CD8-positive, alpha-beta T cell (primary cell): ENCODE measurements at regions of chr16 and their contacts with region 1.

Region 1: GRCh38 chr16:30922960-30923535 is 324 bp upstream of the FBXL19 start:
- DNase-seq: peak; percentile 90 to 99 (median 94)
- ATAC-seq: peak; percentile 66
- H3K4me3 ChIP-seq: peak overlapping the region; percentile 75 to 96
- H3K4me3 Mint-ChIP-seq: peak overlapping the region; percentile 99
- H3K27ac ChIP-seq: peak overlapping the region; percentile 73 to 92
- H3K27ac Mint-ChIP-seq: peak overlapping the region; percentile 99
- H3K4me1 ChIP-seq: peaks cover 14% of the 10 kb centered on the region
- H3K4me1 Mint-ChIP-seq: peaks cover 22% of the 10 kb centered on the region
- H3K27me3 ChIP-seq: no peaks in the 10 kb centered on the region
- H3K27me3 Mint-ChIP-seq: no peaks in the 10 kb centered on the region
- CTCF ChIP-seq: no peak

Region 2: GRCh38 chr16:28935924-28936783 is 1986.9 kb before region 1 on chr16:
- CTCF ChIA-PET with region 1: no interaction called
- POLR2A ChIA-PET with region 1: no interaction called
- intact Hi-C with region 1: no loop called
- DNase-seq: peak; percentile 61 to 89 (median 80)
- ATAC-seq: peak; percentile 100
- H3K4me3 ChIP-seq: peak overlapping the region; percentile 25 to 41
- H3K4me3 Mint-ChIP-seq: peak overlapping the region; percentile 76
- H3K27ac ChIP-seq: no peak overlapping the region
- H3K27ac Mint-ChIP-seq: no peak overlapping the region
- H3K4me1 ChIP-seq: peaks cover 19% of the 10 kb centered on the region
- H3K4me1 Mint-ChIP-seq: peaks cover 15% of the 10 kb centered on the region
- H3K27me3 ChIP-seq: no peaks in the 10 kb centered on the region
- H3K27me3 Mint-ChIP-seq: no peaks in the 10 kb centered on the region
- CTCF ChIP-seq: no peak

Region 3: GRCh38 chr16:30065143-30065850 is 857.8 kb before region 1 on chr16 and contains the start of gene ALDOA:
- CTCF ChIA-PET with region 1: no interaction called
- POLR2A ChIA-PET with region 1: no interaction called
- intact Hi-C with region 1: loop called in 1 of 2 experiments (anchors 10 kb)
- DNase-seq: peak; percentile 82 to 97 (median 94)
- ATAC-seq: peak; percentile 82
- H3K4me3 ChIP-seq: peak within 1 kb of the TSS; percentile 94 to 99
- H3K4me3 Mint-ChIP-seq: peak within 1 kb of the TSS; percentile 98
- H3K27ac ChIP-seq: peak within 1 kb of the TSS; percentile 87 to 94
- H3K27ac Mint-ChIP-seq: peak within 1 kb of the TSS; percentile 98
- H3K4me1 ChIP-seq: peaks cover 48% of the 10 kb centered on the region
- H3K4me1 Mint-ChIP-seq: peaks cover 43% of the 10 kb centered on the region
- H3K27me3 ChIP-seq: no peaks in the 10 kb centered on the region
- H3K27me3 Mint-ChIP-seq: no peaks in the 10 kb centered on the region
- CTCF ChIP-seq: no peak
- total RNA-seq, gene ALDOA: 339 to 359 TPM

Region 4: DNA sequence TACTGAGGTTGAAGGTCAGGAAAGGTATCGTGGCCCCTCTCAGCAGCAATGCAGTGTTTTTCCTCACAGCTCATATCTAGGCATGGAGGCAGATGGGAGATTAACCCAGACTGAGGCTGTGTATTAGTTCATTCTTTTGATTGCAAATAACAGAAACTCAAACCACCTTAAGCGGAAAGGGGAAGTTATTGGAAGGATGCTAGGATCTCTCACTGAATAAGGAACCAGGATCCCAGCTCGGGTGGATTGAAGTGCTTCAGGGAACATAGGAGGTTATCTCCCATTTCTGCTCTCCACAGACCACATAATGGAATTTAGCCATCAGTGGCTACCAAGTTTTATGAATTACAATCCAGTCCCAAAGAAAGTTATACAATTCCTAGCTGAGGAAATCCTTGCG is 321.1 kb before region 1 on chr16:
- CTCF ChIA-PET with region 1: no interaction called
- POLR2A ChIA-PET with region 1: no interaction called
- intact Hi-C with region 1: no loop called
- DNase-seq: no peak
- ATAC-seq: no peak
- H3K4me3 ChIP-seq: no peak overlapping the region
- H3K4me3 Mint-ChIP-seq: no peak overlapping the region
- H3K27ac ChIP-seq: no peak overlapping the region
- H3K27ac Mint-ChIP-seq: no peak overlapping the region
- H3K4me1 ChIP-seq: no peaks in the 10 kb centered on the region
- H3K4me1 Mint-ChIP-seq: no peaks in the 10 kb centered on the region
- H3K27me3 ChIP-seq: no peaks in the 10 kb centered on the region
- H3K27me3 Mint-ChIP-seq: no peaks in the 10 kb centered on the region
- CTCF ChIP-seq: no peak

Region 5: DNA sequence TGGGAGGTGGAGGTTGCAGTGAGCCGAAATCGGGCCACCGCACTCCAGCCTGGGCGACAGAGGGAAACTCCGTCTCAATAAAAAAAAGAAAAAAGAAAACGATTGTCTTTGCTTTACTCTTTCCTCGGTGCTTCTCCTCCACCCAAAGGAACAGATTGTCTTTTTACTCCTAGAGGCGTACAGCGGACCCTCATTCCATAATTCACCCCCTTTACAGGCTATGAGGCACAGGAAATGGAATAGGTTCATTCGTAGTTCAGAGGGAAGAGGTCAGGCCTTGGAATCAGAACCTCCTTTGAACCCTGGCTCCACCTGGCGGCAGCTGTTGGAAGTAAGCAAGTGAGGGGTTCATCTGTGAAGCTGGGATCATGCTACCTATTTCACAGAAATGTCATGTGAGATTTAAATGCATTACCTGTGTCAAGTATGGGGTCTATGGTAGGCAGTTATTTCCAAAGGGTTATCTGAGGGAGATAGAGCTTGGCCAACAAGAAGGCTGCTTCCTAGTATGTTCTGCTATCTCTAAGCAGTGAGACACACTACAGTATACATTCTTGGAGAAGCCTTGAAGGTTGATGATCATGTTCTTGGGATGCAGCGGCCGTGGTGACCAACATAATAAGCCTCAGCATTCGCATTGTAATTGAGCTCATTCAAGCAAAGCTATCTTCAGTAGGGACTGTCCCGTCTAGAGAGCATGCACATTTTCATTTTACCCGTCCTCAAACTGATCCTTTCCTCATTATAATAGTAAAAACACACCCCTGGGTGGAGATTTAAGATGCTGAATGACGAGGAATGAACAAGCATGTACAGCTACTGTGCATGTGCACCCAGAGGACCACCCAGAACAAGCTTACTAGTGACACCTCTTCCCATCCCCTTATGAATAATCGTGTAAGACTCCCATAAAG is 294.2 kb before region 1 on chr16:
- CTCF ChIA-PET with region 1: no interaction called
- POLR2A ChIA-PET with region 1: no interaction called
- intact Hi-C with region 1: loop called in 1 of 2 experiments (anchors 1 kb)
- DNase-seq: peak; percentile 77 to 92 (median 84)
- ATAC-seq: peak; percentile 96
- H3K4me3 ChIP-seq: peak overlapping the region in 1 of 2 experiments; percentile 10
- H3K4me3 Mint-ChIP-seq: peak overlapping the region; percentile 79
- H3K27ac ChIP-seq: peak overlapping the region in 1 of 2 experiments; percentile 19
- H3K27ac Mint-ChIP-seq: no peak overlapping the region
- H3K4me1 ChIP-seq: peaks cover 9% of the 10 kb centered on the region
- H3K4me1 Mint-ChIP-seq: peaks cover 5% of the 10 kb centered on the region
- H3K27me3 ChIP-seq: no peaks in the 10 kb centered on the region
- H3K27me3 Mint-ChIP-seq: no peaks in the 10 kb centered on the region
- CTCF ChIP-seq: peak; percentile 85

Region 6: GRCh38 chr16:30761928-30762810 is 160.9 kb before region 1 on chr16 and contains the starts of genes CFAP119 and RNF40:
- CTCF ChIA-PET with region 1: no interaction called
- POLR2A ChIA-PET with region 1: no interaction called
- intact Hi-C with region 1: loop called (anchors 1 to 5 kb)
- DNase-seq: peak; percentile 67 to 96 (median 90)
- ATAC-seq: peak; percentile 91
- H3K4me3 ChIP-seq: peak within 1 kb of the TSS; percentile 59 to 95
- H3K4me3 Mint-ChIP-seq: peak within 1 kb of the TSS; percentile 96
- H3K27ac ChIP-seq: peak within 1 kb of the TSS; percentile 74 to 93
- H3K27ac Mint-ChIP-seq: peak within 1 kb of the TSS; percentile 92
- H3K4me1 ChIP-seq: peaks cover 24% of the 10 kb centered on the region
- H3K4me1 Mint-ChIP-seq: peaks cover 26% of the 10 kb centered on the region
- H3K27me3 ChIP-seq: no peaks in the 10 kb centered on the region
- H3K27me3 Mint-ChIP-seq: no peaks in the 10 kb centered on the region
- CTCF ChIP-seq: no peak
- total RNA-seq, gene CFAP119: 2.7 to 3.6 TPM
- total RNA-seq, gene RNF40: 98.7 to 101 TPM

Region 7: DNA sequence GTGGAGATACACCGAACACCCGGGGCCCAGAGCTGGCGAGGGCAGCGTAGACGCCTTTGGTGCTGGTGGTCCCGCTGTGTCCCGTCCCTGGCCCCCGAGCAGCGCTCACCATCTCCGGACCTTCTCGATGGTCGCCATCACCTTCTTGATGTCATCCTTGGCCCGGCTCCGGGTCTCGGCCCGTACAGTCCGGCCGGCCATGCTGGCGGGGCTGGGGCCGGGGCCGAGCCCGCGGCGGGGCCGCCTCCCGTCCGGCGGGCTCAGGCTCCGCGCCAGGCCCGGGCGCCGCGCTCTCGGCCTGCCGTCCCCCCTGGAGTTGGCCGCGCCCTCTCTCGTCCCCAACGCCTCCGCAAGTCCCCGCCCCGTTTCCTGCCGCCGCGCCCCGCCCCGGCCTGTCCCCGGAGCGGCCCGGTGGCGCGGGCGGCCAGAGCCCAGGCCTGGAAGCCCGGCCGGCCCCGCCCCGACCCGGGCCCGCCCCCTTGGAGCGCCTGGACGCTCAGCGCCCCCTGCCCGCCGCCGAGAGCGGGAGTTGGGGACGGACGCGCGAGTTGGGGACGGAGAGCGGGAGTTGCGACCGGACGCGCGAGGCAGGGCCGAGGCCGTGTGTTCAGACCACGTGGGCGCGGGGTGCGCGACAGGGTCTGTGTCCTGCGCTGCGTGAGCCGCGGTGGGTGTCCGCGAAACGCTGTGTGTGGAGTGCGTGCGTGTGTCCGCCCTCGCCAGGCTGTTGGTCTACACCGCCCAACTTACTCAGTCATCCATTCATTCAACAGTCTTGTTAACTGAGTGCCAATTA is 29.1 kb before region 1 on chr16 and contains the start of gene BCL7C:
- CTCF ChIA-PET with region 1: no interaction called
- POLR2A ChIA-PET with region 1: no interaction called
- intact Hi-C with region 1: loop called (anchors 1 kb)
- DNase-seq: peak; percentile 33 to 88 (median 78)
- ATAC-seq: peak; percentile 73
- H3K4me3 ChIP-seq: peak within 1 kb of the TSS; percentile 72 to 85
- H3K4me3 Mint-ChIP-seq: peak within 1 kb of the TSS; percentile 88
- H3K27ac ChIP-seq: peak within 1 kb of the TSS; percentile 45 to 83
- H3K27ac Mint-ChIP-seq: peak within 1 kb of the TSS; percentile 92
- H3K4me1 ChIP-seq: peaks cover 33% of the 10 kb centered on the region
- H3K4me1 Mint-ChIP-seq: peaks cover 43% of the 10 kb centered on the region
- H3K27me3 ChIP-seq: no peaks in the 10 kb centered on the region
- H3K27me3 Mint-ChIP-seq: no peaks in the 10 kb centered on the region
- CTCF ChIP-seq: no peak
- total RNA-seq, gene BCL7C: 16.0 to 16.2 TPM

Region 8: GRCh38 chr16:30997000-30997886 is 74.2 kb after region 1 on chr16:
- CTCF ChIA-PET with region 1: no interaction called
- POLR2A ChIA-PET with region 1: no interaction called
- intact Hi-C with region 1: loop called in 1 of 2 experiments (anchors 1 kb)
- DNase-seq: peak; percentile 67 to 88 (median 80)
- ATAC-seq: peak; percentile 99
- H3K4me3 ChIP-seq: peak overlapping the region; percentile 61 to 93
- H3K4me3 Mint-ChIP-seq: peak overlapping the region; percentile 85
- H3K27ac ChIP-seq: peak overlapping the region; percentile 40 to 55
- H3K27ac Mint-ChIP-seq: peak overlapping the region; percentile 90
- H3K4me1 ChIP-seq: peaks cover 11% of the 10 kb centered on the region
- H3K4me1 Mint-ChIP-seq: peaks cover 10% of the 10 kb centered on the region
- H3K27me3 ChIP-seq: no peaks in the 10 kb centered on the region
- H3K27me3 Mint-ChIP-seq: no peaks in the 10 kb centered on the region
- CTCF ChIP-seq: no peak

Region 9: DNA sequence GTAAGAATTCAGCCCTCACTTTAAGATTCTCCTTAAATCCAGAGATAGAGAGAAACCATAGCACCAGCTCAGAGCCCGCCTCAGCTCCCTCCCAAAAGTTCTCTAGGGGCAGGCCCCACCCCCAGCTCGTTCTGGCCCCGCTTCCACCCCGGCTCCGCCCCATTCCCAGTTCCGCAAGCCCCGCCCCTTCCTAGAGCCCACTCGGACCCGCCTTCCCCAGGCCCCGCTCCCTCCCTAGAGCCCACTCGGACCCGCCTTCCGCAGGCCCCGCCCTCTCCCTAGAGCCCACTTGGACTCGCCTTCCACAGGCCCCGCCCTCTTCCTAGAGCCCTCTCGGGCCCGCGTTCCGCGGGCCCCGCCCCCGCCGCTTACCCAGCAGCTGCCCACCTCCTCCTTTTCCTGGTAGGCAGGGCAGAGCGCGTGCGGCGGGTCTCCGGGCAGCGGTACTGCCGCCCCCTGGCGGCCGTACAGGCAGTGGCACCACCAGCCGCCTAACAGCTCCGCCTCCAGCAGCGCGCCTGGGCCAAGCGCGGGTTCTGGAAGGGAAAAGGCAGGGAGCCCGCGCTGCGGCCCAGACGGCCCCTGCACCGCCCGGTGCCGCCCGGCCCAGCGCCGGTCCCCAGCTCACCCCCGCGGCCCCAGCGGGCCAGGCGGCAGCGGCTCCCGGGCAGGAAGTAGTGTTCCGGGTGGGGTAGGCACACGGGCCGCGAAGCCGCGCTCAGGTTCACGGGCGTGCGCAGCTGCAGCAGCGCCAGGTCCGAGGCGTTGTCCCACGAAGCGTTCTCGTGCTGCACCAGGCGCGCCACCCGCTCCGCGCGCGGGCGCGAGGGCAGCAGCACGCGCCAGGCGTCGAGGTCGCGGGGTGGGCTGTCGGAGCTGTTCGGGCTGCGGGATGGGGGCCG is 219.3 kb after region 1 on chr16:
- CTCF ChIA-PET with region 1: no interaction called
- POLR2A ChIA-PET with region 1: no interaction called
- intact Hi-C with region 1: loop called in 1 of 2 experiments (anchors 5 kb)
- DNase-seq: peak; percentile 90 to 98 (median 95)
- ATAC-seq: peak; percentile 91
- H3K4me3 ChIP-seq: peak overlapping the region; percentile 35 to 66
- H3K4me3 Mint-ChIP-seq: peak overlapping the region; percentile 69
- H3K27ac ChIP-seq: peak overlapping the region; percentile 42 to 67
- H3K27ac Mint-ChIP-seq: peak overlapping the region; percentile 77
- H3K4me1 ChIP-seq: peaks cover 16% of the 10 kb centered on the region
- H3K4me1 Mint-ChIP-seq: peaks cover 14% of the 10 kb centered on the region
- H3K27me3 ChIP-seq: no peaks in the 10 kb centered on the region
- H3K27me3 Mint-ChIP-seq: no peaks in the 10 kb centered on the region
- CTCF ChIP-seq: peak; percentile 84